ENCODE measurements at regions of chr2 and their contacts with region 1.

Region 1: GRCh38 chr2:112626604-112627059 is 19.1 kb upstream of the SLC20A1 start:
- DNase-seq: no peak
- ATAC-seq: peak; percentile 86
- H3K4me3 ChIP-seq: no peak overlapping the region
- H3K27ac ChIP-seq: no peak overlapping the region
- H3K4me1 ChIP-seq: peaks cover 19% of the 10 kb centered on the region
- H3K27me3 ChIP-seq: no peaks in the 10 kb centered on the region
- CTCF ChIP-seq: peak; percentile 91 to 95 (median 92)
- EP300 ChIP-seq: no peak
- POLR2A ChIP-seq: no peak
- RAD21 ChIP-seq: peak; percentile 94

Region 2: DNA sequence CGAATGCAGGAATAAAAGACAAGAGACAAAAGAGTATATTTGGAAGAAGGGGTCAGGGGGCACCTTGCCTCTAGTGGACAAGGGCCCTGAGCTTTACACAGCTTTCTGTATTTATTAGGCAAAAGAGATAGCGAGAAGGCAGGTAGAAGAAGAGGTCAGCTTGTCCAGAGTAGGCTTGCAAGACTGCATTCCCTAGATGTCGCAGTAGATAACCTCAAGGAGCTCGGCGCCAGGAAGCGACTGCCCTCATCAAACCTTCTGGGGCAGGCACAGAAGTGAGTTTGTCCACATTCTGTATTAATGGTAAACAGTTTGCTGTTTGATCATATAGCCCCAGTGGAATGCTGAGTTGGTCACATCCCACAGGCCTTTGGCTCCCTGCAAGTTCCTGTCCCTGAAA is 35.3 kb before region 1 on chr2:
- CTCF ChIA-PET with region 1: interaction called, 12 read pairs
- POLR2A ChIA-PET with region 1: no interaction called
- RAD21 ChIA-PET with region 1: no interaction called
- SMC1A ChIA-PET with region 1: no interaction called
- in situ Hi-C with region 1: no loop called
- intact Hi-C with region 1: no loop called
- DNase-seq: no peak
- ATAC-seq: no peak
- H3K4me3 ChIP-seq: no peak overlapping the region
- H3K27ac ChIP-seq: no peak overlapping the region
- H3K4me1 ChIP-seq: no peaks in the 10 kb centered on the region
- H3K27me3 ChIP-seq: no peaks in the 10 kb centered on the region; a peak in 1 of 4 replicates
- CTCF ChIP-seq: no peak
- EP300 ChIP-seq: no peak
- POLR2A ChIP-seq: no peak
- RAD21 ChIP-seq: no peak

Region 3: DNA sequence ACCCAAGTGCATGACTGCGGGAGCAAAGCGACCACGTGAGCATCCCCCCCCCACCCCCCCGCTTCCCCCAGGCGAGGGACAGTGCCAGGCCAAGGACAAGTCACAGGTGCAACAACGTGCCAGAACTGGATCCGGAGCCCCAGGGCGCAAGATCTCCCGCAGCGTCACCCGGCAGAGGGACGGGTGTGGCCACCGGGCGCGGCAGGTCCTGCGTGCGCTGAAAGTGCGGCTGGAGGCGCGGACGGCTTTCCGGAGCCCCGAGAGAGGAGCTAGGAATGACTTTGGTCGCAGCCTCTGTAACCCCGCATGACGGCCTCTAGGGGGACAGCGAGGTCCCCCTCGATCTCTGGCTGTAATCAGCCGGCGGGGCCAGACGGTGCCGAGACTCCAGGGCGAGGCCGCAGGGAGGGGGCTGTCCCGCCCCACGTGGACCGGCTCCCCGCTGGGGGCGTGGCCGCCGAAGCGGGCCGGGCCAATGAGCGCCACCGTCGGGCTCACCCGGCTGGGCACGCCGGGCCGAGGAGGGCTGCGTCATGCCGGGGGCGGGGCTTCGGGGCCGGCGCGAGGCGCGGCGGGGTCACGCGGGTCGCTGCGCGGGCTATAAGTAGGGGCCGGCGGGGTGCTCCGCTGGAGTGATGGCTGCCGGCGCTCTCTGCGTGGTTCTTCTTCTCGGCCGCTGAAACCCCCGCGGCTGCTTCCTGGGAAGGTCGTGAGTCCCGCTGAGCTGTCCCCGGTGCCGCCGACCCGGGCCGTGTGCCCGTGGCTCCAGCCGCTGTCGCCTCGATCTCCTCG is 18.9 kb after region 1 on chr2 and contains the start of gene SLC20A1:
- CTCF ChIA-PET with region 1: interaction called, 155 read pairs
- POLR2A ChIA-PET with region 1: interaction called, 143 read pairs
- RAD21 ChIA-PET with region 1: interaction called, 85 read pairs
- SMC1A ChIA-PET with region 1: interaction called, 118 read pairs
- in situ Hi-C with region 1: no loop called
- intact Hi-C with region 1: loop called (anchors 1 kb)
- DNase-seq: peak; percentile 74
- ATAC-seq: peak; percentile 94
- H3K4me3 ChIP-seq: peak within 1 kb of the TSS; percentile 89
- H3K27ac ChIP-seq: peak within 1 kb of the TSS; percentile 87
- H3K4me1 ChIP-seq: peaks cover 6% of the 10 kb centered on the region
- H3K27me3 ChIP-seq: peaks cover 0 to 2% of the 10 kb centered on the region in 2 experiments; a peak in 1 of 4 replicates
- CTCF ChIP-seq: peak; percentile 42 to 62 (median 52)
- EP300 ChIP-seq: 0 out of 4 replicates have a peak, but pooled peaks of 1 of the 2 experiments have one; percentile 32
- POLR2A ChIP-seq: peak; percentile 99
- RAD21 ChIP-seq: peak; percentile 54
- polyA plus RNA-seq, gene SLC20A1: 21.2 to 22.6 TPM

Region 4: GRCh38 chr2:112692496-112692911 is 65.9 kb after region 1 on chr2:
- CTCF ChIA-PET with region 1: interaction called, 313 read pairs
- POLR2A ChIA-PET with region 1: interaction called, 56 read pairs
- RAD21 ChIA-PET with region 1: interaction called, 213 read pairs
- SMC1A ChIA-PET with region 1: interaction called, 272 read pairs
- in situ Hi-C with region 1: no loop called
- intact Hi-C with region 1: loop called (anchors 1 kb)
- DNase-seq: peak; percentile 87
- ATAC-seq: peak; percentile 94
- H3K4me3 ChIP-seq: no peak overlapping the region
- H3K27ac ChIP-seq: peak overlapping the region; percentile 76
- H3K4me1 ChIP-seq: peaks cover 32% of the 10 kb centered on the region
- H3K27me3 ChIP-seq: no peaks in the 10 kb centered on the region
- CTCF ChIP-seq: no peak
- EP300 ChIP-seq: peak; percentile 68 to 79
- POLR2A ChIP-seq: peak; percentile 64
- RAD21 ChIP-seq: no peak

Region 5: GRCh38 chr2:112706170-112706664 is 79.6 kb after region 1 on chr2:
- CTCF ChIA-PET with region 1: interaction called, 41 read pairs
- POLR2A ChIA-PET with region 1: interaction called, 13 read pairs
- RAD21 ChIA-PET with region 1: interaction called, 51 read pairs
- SMC1A ChIA-PET with region 1: interaction called, 100 read pairs
- in situ Hi-C with region 1: no loop called
- intact Hi-C with region 1: no loop called
- DNase-seq: peak; percentile 64
- ATAC-seq: peak; percentile 63
- H3K4me3 ChIP-seq: no peak overlapping the region; the same call in 1 of the 2 replicates
- H3K27ac ChIP-seq: peak overlapping the region; percentile 94
- H3K4me1 ChIP-seq: peaks cover 53% of the 10 kb centered on the region
- H3K27me3 ChIP-seq: no peaks in the 10 kb centered on the region
- CTCF ChIP-seq: no peak
- EP300 ChIP-seq: no peak; a peak in 1 of 4 replicates
- POLR2A ChIP-seq: no peak
- RAD21 ChIP-seq: no peak

Region 6: GRCh38 chr2:112733456-112733855 is 106.8 kb after region 1 on chr2:
- CTCF ChIA-PET with region 1: interaction called, 671 read pairs
- POLR2A ChIA-PET with region 1: interaction called, 41 read pairs
- RAD21 ChIA-PET with region 1: interaction called, 494 read pairs
- SMC1A ChIA-PET with region 1: interaction called, 455 read pairs
- in situ Hi-C with region 1: no loop called
- intact Hi-C with region 1: no loop called
- DNase-seq: no peak
- ATAC-seq: no peak
- H3K4me3 ChIP-seq: no peak overlapping the region
- H3K27ac ChIP-seq: no peak overlapping the region
- H3K4me1 ChIP-seq: peaks cover under 1% of the 10 kb centered on the region; the same call in 1 of the 2 replicates
- H3K27me3 ChIP-seq: no peaks in the 10 kb centered on the region
- CTCF ChIP-seq: no peak
- EP300 ChIP-seq: no peak
- POLR2A ChIP-seq: no peak
- RAD21 ChIP-seq: no peak